ENCODE measurements at regions of chr3 and their contacts with region 1.

Region 1: GRCh38 chr3:20340324-20340928 is 154.4 kb upstream of the SGO1 start:
- DNase-seq: peak; percentile 80
- ATAC-seq: peak; percentile 73
- H3K4me3 Mint-ChIP-seq: no peak overlapping the region
- H3K27ac Mint-ChIP-seq: no peak overlapping the region
- H3K4me1 Mint-ChIP-seq: peaks cover 5% of the 10 kb centered on the region
- H3K27me3 Mint-ChIP-seq: no peaks in the 10 kb centered on the region

Region 2: GRCh38 chr3:21484057-21484827 is 1143.8 kb after region 1 on chr3:
- CTCF ChIA-PET with region 1: no interaction called
- POLR2A ChIA-PET with region 1: no interaction called
- intact Hi-C with region 1: loop called in 1 of 2 experiments (anchors 1 kb)
- DNase-seq: peak; percentile 29
- ATAC-seq: no peak
- H3K4me3 Mint-ChIP-seq: no peak overlapping the region
- H3K27ac Mint-ChIP-seq: no peak overlapping the region
- H3K4me1 Mint-ChIP-seq: no peaks in the 10 kb centered on the region
- H3K27me3 Mint-ChIP-seq: no peaks in the 10 kb centered on the region

Region 3: GRCh38 chr3:21894459-21895340 is 1554.3 kb after region 1 on chr3:
- CTCF ChIA-PET with region 1: interaction called, 3 read pairs
- POLR2A ChIA-PET with region 1: no interaction called
- intact Hi-C with region 1: loop called in 1 of 2 experiments (anchors 1 kb)
- DNase-seq: no peak
- ATAC-seq: no peak
- H3K4me3 Mint-ChIP-seq: no peak overlapping the region
- H3K27ac Mint-ChIP-seq: no peak overlapping the region
- H3K4me1 Mint-ChIP-seq: no peaks in the 10 kb centered on the region
- H3K27me3 Mint-ChIP-seq: no peaks in the 10 kb centered on the region

Region 4: GRCh38 chr3:22117751-22118346 is 1777.4 kb after region 1 on chr3:
- CTCF ChIA-PET with region 1: no interaction called
- POLR2A ChIA-PET with region 1: no interaction called
- intact Hi-C with region 1: loop called in 1 of 2 experiments (anchors 2 kb)
- DNase-seq: no peak
- ATAC-seq: no peak
- H3K4me3 Mint-ChIP-seq: no peak overlapping the region
- H3K27ac Mint-ChIP-seq: no peak overlapping the region
- H3K4me1 Mint-ChIP-seq: no peaks in the 10 kb centered on the region
- H3K27me3 Mint-ChIP-seq: no peaks in the 10 kb centered on the region

Measured in activated CD4-positive, alpha-beta T cell treated with anti-CD3 and anti-CD28 coated beads for 36 hours (primary cell).